ENCODE measurements at regions of chr1 and their contacts with region 1.

Region 1: DNA sequence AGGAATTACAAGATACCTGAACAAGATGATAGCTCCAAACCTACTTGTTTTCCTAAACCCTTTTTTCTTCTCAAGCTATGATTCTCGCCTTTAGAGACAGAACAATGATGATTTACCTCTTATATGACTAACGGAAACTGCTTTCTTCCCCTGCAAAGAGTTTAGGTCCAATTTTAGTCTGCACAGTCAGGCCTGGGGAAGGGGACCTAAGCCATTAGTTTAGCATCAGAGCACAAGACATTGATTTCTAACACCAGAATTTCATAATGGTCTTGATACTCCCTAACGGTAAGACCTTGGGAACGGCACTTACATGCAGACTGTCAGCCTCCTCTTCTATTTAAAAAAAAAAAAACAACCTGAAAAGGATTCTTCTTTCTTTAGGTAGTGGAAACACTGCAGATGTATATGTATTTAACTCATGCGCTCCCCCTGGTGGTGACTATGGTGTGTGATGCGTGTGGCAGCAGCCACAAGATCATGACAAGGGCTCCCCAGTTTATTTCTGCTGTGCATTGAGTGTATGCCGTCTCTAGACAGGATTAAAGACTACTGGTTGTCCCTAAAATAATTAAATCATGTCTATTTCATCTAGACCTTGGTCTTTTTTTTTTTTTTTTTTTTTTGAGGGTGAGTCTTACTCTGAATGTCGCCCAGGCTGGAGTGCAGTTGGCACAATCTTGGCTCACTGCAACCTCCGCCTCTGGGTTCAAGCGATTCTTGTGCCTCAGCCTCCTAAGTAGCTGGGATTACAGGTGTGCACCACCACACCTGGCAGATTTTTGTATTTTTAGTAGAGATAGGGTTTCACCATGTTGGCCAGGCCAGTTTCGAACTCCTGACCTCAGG is 37.3 kb upstream of the TMEM222 start:
- DNase-seq: peak; percentile 90
- ATAC-seq: peak; percentile 88
- H3K4me3 Mint-ChIP-seq: no peak overlapping the region
- H3K27ac Mint-ChIP-seq: peak overlapping the region; percentile 17
- H3K4me1 Mint-ChIP-seq: no peaks in the 10 kb centered on the region; the same call in 1 of the 2 replicates
- H3K27me3 Mint-ChIP-seq: no peaks in the 10 kb centered on the region
- CTCF ChIP-seq: peak; percentile 91

Region 2: DNA sequence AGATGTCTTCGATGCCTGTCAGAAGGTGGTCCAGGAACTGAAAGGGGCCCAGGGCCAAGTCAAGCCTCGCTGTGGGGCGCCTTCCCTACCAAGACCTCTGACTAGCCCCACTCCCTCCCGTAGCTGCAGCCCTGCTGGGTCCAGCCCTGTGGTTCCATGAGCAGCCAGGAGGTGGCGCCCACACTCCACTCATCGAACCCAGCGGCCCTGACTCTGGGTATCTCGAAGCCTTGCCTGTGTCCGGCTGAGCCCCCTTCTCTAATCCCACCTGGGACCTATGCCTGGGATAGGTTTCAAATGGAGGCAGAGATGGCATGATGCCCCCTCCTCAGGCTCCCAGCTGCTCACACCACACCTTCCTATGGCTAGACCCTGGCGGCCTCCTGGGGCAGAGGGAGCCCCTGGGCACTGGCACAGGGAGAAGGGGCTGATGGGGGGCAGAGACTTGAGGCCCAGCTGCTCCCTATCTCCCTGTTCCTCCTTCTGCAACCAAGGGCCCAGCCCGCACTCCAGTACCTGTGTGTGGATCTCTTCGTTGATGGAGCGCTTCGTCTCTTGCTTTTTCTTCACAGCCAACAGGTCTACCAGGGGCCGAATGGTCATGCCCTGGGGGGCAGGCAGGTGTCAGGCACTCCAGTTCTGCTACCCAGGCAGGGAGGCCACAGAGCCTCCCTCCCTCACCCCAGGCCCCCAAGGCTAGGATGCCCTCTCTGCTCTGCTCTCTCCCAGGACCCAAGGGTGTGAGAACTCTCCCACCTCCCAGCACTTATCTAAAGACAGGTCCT is 181.8 kb before region 1 on chr1:
- CTCF ChIA-PET with region 1: interaction called, 12 read pairs
- POLR2A ChIA-PET with region 1: no interaction called
- DNase-seq: peak; percentile 95
- ATAC-seq: peak; percentile 84
- H3K4me3 Mint-ChIP-seq: no peak overlapping the region
- H3K27ac Mint-ChIP-seq: no peak overlapping the region
- H3K4me1 Mint-ChIP-seq: peaks cover 29% of the 10 kb centered on the region
- H3K27me3 Mint-ChIP-seq: no peaks in the 10 kb centered on the region; the same call in 1 of the 2 replicates
- CTCF ChIP-seq: peak; percentile 99

Region 3: GRCh38 chr1:27111626-27112573 is 172.7 kb before region 1 on chr1:
- CTCF ChIA-PET with region 1: interaction called, 13 read pairs
- POLR2A ChIA-PET with region 1: no interaction called
- DNase-seq: no peak
- ATAC-seq: peak; percentile 63
- H3K4me3 Mint-ChIP-seq: no peak overlapping the region
- H3K27ac Mint-ChIP-seq: peak overlapping the region; percentile 74
- H3K4me1 Mint-ChIP-seq: peaks cover 7% of the 10 kb centered on the region
- H3K27me3 Mint-ChIP-seq: no peaks in the 10 kb centered on the region
- CTCF ChIP-seq: no peak

Region 4: DNA sequence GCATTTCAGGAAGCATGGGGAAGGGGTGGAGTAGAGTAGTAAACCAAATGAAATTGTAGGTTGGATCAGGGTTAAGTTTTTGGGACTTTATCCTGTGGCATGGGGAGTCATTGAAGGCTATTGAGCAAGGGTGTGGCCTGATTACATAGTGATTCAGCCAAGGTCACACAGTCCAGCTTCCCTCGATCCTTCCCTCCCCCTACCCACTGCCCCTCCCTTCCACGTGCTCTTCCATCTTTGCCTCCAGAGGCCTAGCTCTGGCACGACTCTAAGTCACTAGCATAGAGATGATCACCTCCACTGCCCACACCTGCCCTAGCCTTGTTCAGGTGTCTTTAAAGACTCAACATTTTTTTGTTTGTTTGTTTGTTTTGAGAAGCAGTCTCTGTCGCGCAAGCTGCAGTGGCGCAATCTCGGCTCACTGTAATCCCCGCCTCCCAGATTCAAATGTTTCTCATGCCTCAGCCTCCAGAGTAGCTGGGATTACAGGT is 92.6 kb before region 1 on chr1:
- CTCF ChIA-PET with region 1: interaction called, 10 read pairs
- POLR2A ChIA-PET with region 1: no interaction called
- DNase-seq: no peak
- ATAC-seq: no peak
- H3K4me3 Mint-ChIP-seq: no peak overlapping the region
- H3K27ac Mint-ChIP-seq: no peak overlapping the region
- H3K4me1 Mint-ChIP-seq: no peaks in the 10 kb centered on the region
- H3K27me3 Mint-ChIP-seq: peaks cover 2% of the 10 kb centered on the region; the same call in 1 of the 2 replicates
- CTCF ChIP-seq: no peak